ENCODE measurements at regions of chr5 and their contacts with region 1.

Region 1: DNA sequence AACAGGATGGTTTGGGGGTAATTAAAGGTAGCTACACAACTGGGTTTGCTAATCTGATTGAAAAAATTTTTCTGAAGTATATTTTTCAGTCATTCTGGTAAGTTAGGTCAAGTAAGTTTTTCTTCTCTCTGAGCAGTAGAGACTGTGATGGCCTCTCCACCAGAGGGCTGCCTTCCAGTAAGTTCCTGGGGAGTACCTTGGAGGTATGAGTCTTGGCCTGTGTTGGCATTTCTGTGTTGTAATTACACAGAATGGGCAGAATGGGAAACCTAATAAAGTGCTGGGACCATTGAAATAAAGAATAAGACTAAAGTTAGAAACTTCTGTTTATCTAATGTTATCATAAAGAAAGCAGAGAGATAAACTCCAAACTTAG is 430.8 kb downstream of the ARHGEF28 start:
- DNase-seq: peak; percentile 62
- H3K4me3 Mint-ChIP-seq: no peak overlapping the region
- H3K27ac Mint-ChIP-seq: no peak overlapping the region
- H3K4me1 Mint-ChIP-seq: peaks cover 8% of the 10 kb centered on the region
- H3K27me3 Mint-ChIP-seq: no peaks in the 10 kb centered on the region
- CTCF ChIP-seq: peak; percentile 41

Region 2: DNA sequence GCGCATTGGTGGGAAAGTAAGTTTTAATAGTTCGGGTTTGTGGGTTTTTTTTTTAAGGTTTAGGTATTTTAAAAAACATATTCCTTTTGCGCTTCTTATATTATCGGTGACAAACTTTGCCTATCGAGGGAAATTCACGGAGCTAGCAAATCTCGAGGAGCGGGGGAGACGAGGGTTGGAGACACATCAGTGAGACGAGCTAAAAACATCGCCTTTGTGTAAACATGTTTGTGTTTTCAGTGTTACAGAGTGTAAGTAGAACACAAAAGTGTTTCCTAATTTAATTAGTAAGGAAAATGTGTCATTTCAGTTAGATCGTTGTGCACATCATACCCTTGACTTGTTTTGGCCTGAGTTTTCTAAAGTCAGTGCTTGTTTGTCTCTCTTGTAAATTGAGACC is 557.6 kb before region 1 on chr5:
- CTCF ChIA-PET with region 1: no interaction called
- intact Hi-C with region 1: no loop called
- DNase-seq: no peak
- H3K4me3 Mint-ChIP-seq: peak overlapping the region; percentile 96
- H3K27ac Mint-ChIP-seq: peak overlapping the region; percentile 98
- H3K4me1 Mint-ChIP-seq: peaks cover 13% of the 10 kb centered on the region
- H3K27me3 Mint-ChIP-seq: no peaks in the 10 kb centered on the region
- CTCF ChIP-seq: no peak

Region 3: DNA sequence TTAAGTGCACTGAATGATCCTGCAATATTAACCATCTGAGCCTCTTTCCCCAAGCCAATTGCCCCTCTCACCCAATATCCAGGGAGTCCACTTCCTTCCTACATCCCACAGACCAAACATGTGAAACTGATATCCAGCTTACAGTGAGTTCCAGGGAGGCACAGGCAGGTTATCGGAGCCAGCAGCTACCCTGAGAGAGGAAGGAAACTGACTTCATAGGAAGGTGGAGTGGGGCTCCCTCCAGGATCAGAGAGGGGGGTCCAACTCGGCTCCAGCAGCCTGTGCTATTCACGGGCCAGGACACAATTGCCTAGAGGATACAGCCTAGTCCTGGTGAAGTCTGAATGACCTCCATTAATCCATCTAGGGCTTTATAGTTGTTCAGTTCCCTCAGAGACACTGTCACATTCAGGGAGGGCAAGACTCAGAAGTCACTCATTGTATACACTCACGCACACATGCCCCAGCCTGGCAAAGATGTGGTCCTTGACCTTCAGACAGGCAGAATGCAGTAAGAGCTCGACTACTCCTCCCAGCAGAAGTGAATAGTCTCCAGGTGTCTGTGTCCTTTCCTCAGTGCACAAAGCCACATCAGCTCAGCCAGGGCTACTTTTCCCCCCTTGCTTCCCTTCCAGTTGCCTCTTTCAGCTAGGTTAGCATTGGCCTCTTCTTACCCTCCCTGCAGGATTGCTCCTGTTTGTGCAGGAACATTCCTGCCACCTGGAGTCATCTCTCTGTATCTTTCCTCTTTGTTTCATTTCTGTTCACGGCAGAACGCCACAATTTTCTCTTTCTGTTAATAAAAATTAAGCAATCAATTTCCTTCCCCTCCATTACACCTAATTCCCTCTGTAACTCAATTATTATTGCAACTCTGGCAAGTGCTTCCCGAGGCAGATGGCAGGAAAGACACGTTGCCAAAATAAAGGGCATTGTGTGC is 70.9 kb after region 1 on chr5:
- CTCF ChIA-PET with region 1: no interaction called
- intact Hi-C with region 1: loop called (anchors 1 kb)
- DNase-seq: peak; percentile 52
- H3K4me3 Mint-ChIP-seq: peak overlapping the region; percentile 54
- H3K27ac Mint-ChIP-seq: peak overlapping the region; percentile 23
- H3K4me1 Mint-ChIP-seq: peaks cover 28% of the 10 kb centered on the region
- H3K27me3 Mint-ChIP-seq: no peaks in the 10 kb centered on the region
- CTCF ChIP-seq: peak; percentile 26

Region 4: DNA sequence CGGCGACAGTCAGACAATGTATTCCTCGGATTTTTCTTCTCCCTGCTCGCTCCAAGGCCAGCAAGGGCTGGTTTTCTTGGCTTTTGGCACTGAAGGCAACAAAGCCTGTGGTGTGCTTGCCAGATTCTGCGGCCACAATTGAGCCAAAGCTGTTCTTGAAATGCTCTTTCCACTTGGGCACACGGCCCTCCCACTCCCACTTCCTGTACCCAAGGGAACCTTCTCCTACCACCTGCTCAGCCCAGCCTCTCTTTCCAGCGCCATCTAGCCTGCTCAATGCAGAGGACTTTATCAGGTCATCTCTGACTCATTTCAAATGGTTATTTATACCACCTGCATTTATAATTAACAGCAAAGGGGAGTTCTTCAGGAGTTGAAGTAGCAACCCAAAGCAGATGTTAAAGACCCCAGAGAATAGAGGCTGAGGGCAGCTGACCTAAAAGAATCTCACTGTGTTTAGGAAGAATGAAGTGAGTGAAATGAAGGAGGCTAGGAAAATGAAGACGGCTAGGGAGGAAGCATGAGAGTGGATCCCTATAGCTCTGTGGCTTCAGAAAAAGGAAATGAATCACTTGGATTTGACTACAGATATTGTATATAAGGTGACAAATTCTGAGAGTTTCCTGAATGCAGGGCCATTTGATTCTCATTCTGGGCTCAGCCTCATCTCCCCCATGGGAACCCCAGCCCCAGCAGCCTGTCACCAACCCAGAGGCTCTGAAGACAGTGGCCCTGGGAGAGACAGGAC is 144.7 kb after region 1 on chr5:
- CTCF ChIA-PET with region 1: no interaction called
- intact Hi-C with region 1: loop called (anchors 5 kb)
- DNase-seq: peak; percentile 75
- H3K4me3 Mint-ChIP-seq: peak overlapping the region; percentile 48
- H3K27ac Mint-ChIP-seq: peak overlapping the region; percentile 91
- H3K4me1 Mint-ChIP-seq: peaks cover 49% of the 10 kb centered on the region
- H3K27me3 Mint-ChIP-seq: no peaks in the 10 kb centered on the region
- CTCF ChIP-seq: no peak

Measured in Calu3 (cell line).